ENCODE measurements at regions of chr16 and their contacts with region 1.

Region 1: DNA sequence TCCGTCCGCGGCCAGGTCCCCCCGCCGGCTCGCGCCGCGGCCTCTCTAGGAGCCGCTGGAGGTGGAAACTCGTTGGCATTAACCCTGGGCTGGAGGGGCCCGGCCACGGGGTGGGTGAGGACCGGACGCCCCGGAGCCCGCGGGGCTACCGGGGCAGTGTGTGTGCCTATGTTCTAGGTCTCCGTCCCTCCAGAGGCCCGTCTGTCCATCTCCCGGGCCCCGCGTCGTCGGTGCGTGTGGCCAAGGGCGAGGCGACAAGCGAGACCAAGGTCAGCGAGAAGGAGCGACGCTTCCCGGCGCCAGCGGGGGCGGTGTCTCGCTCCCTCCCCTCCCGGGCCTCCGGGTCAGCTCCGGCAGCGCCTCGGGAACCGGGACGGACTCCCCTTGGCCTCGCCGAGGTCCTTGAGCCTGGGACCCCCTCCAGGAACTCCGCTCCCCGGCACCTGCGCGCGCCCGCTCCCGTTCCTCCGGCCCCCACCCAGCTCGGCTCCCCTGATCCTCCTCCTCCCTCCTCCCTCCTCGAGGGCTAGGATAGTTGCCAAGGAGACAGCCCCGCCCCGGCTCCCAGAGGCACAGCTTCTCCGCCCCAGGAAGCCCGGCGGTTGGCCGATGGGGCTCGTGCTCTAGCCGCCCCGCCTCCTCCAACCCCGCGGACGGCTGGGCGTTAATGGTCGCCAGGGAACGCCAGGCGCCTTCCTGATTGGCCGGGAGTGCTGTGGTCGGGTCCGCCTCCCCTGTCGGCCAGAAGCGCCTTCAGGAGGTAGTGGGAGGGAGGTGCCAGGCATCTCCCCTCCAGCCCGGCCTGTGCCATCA is 663 bp upstream of the ZNF768 start:
- DNase-seq: peak; percentile 100
- H3K4me3 ChIP-seq: peak overlapping the region; percentile 47 to 96 (median 80)
- H3K27ac ChIP-seq: peak overlapping the region; percentile 88 to 99 (median 97)
- H3K4me1 ChIP-seq: peaks cover 6 to 71% (median 32%) of the 10 kb centered on the region in 6 donors
- H3K27me3 ChIP-seq: no peaks in the 10 kb centered on the region
- CTCF ChIP-seq: peak; percentile 5 to 57 (median 24)
- POLR2A ChIP-seq: peak in 1 of 3 donors; percentile 44

Region 2: GRCh38 chr16:30407102-30407803 is 119.8 kb before region 1 on chr16 and contains the start of gene ZNF771:
- intact Hi-C with region 1: no loop called
- DNase-seq: peak; percentile 97
- H3K4me3 ChIP-seq: peak within 1 kb of the TSS; percentile 55 to 93 (median 79)
- H3K27ac ChIP-seq: peak within 1 kb of the TSS; percentile 45 to 90 (median 83)
- H3K4me1 ChIP-seq: peaks cover 16 to 50% (median 32%) of the 10 kb centered on the region in 6 donors
- H3K27me3 ChIP-seq: no peaks in the 10 kb centered on the region
- CTCF ChIP-seq: peak in 6 of 11 experiments; percentile 17 to 54 (median 34)
- POLR2A ChIP-seq: no peak
- total RNA-seq, gene ZNF771: 2.2 to 10.2 (median 3.1) TPM

Region 3: GRCh38 chr16:30445408-30446202 is 81.4 kb before region 1 on chr16 and contains the start of gene SEPHS2:
- intact Hi-C with region 1: loop called (anchors 10 kb)
- DNase-seq: peak; percentile 98
- H3K4me3 ChIP-seq: peak within 1 kb of the TSS; percentile 65 to 99 (median 86)
- H3K27ac ChIP-seq: peak within 1 kb of the TSS; percentile 82 to 99 (median 97)
- H3K4me1 ChIP-seq: peaks cover 28 to 56% (median 43%) of the 10 kb centered on the region in 6 donors
- H3K27me3 ChIP-seq: no peaks in the 10 kb centered on the region
- CTCF ChIP-seq: peak in 9 of 11 experiments; percentile 14 to 62 (median 37)
- POLR2A ChIP-seq: peak; percentile 77 to 94 (median 86)
- total RNA-seq, gene SEPHS2: 35.5 to 54.7 (median 43.7) TPM

Region 4: DNA sequence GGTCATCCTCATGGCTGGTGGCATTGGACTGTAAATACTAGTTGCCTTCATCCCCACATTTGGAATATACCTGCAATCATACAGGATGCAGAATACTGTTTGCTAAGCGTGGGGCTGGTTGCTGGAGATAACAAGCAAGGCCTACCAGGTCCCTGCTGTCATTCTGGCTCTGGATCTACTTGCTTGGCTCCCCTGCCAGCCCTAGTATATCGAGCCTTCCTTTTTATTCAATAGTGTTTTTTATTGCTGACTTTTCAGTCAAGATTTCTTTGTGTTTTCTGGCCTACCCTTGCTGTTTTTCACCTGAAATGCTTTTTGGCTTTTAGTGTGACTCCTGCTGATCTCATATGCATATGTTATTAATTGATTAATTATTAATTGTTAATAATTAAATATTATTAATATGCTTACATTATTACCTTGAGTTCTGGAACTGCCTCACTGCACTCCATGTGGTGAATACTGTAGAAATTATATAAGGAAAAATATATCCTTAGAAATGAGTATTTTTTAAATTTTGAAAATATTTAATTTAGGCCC is 46.5 kb after region 1 on chr16:
- intact Hi-C with region 1: no loop called
- DNase-seq: peak; percentile 9
- H3K4me3 ChIP-seq: no peak overlapping the region
- H3K27ac ChIP-seq: no peak overlapping the region
- H3K4me1 ChIP-seq: peaks cover 21 to 47% (median 34%) of the 10 kb centered on the region in 6 donors
- H3K27me3 ChIP-seq: no peaks in the 10 kb centered on the region
- CTCF ChIP-seq: no peak
- POLR2A ChIP-seq: no peak